ENCODE measurements at regions of chr5 and their contacts with region 1.

Region 1: GRCh38 chr5:56814963-56815658 is at the start of gene MAP3K1:
- DNase-seq: peak; percentile 81
- H3K4me3 ChIP-seq: peak within 1 kb of the TSS; percentile 66 to 88 (median 72)
- H3K27ac ChIP-seq: peak within 1 kb of the TSS; percentile 84 to 93 (median 86)
- H3K4me1 ChIP-seq: peaks cover 0 to 9% (median 3%) of the 10 kb centered on the region in 4 donors
- H3K27me3 ChIP-seq: no peaks in the 10 kb centered on the region
- CTCF ChIP-seq: no peak
- EP300 ChIP-seq: no peak
- POLR2A ChIP-seq: peak in 1 of 2 donors; percentile 31
- total RNA-seq, gene MAP3K1: 7.2 to 12.5 (median 10.3) TPM

Region 2: DNA sequence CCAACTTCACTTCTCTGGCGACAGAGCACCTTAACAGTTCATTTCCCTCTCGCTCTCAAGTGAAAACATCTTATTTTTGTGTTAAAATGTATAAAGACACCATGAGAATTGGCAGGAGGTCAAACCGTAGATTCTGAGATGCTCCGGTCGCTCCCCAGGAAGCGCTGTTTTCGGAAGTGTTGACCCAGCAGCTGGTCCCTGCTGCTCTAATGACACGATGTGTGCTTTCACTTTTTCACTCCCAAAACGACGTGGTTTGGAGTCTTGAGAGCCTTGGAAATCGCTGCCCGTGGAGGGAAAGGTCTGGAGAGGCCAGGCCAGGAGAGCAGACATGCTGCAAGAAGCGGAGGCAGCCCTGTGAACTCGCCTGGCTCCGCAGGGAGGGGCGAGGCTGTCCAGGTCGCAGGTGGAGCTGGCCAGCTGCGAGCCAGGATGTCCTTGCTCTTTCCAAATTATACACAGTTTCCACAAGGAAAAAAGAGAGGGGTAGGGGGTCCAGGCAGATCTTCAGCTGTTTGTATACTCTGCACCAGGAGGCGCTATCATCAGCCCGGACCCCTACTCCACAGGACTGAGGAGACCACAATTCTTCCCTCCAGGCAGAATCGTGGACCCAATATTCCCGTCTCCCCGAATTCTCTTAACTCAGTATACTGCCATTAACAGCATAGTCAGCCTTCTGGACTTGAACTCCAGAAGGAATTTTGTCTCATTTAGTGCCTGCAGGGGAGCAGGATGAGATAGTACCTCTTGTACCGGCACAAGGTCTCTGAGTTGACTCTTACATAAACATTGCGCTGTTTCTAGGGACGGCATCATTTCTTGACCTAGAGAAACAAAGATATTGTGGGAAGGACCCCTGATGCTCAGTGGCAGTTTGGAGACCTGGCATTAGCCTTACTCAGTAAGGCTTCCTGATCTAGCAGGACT is 333.4 kb before region 1 on chr5:
- intact Hi-C with region 1: loop called (anchors 10 kb)
- DNase-seq: peak; percentile 76
- H3K4me3 ChIP-seq: peak overlapping the region; percentile 47 to 77 (median 74)
- H3K27ac ChIP-seq: peak overlapping the region; percentile 81 to 89 (median 84)
- H3K4me1 ChIP-seq: peaks cover 0 to 24% (median 9%) of the 10 kb centered on the region in 4 donors
- H3K27me3 ChIP-seq: no peaks in the 10 kb centered on the region
- CTCF ChIP-seq: no peak
- EP300 ChIP-seq: no peak
- POLR2A ChIP-seq: no peak

Region 3: GRCh38 chr5:56909294-56910209 is 94.4 kb after region 1 on chr5 and contains the start of gene SETD9:
- intact Hi-C with region 1: loop called (anchors 5 kb)
- DNase-seq: peak; percentile 99
- H3K4me3 ChIP-seq: peak within 1 kb of the TSS; percentile 54 to 73 (median 69)
- H3K27ac ChIP-seq: peak within 1 kb of the TSS; percentile 90 to 98 (median 96)
- H3K4me1 ChIP-seq: peaks cover 0 to 9% (median 7%) of the 10 kb centered on the region in 4 donors
- H3K27me3 ChIP-seq: no peaks in the 10 kb centered on the region
- CTCF ChIP-seq: no peak
- EP300 ChIP-seq: no peak
- POLR2A ChIP-seq: peak; percentile 68 to 69
- total RNA-seq, gene SETD9: 6.6 to 30.7 (median 19.4) TPM

Region 4: DNA sequence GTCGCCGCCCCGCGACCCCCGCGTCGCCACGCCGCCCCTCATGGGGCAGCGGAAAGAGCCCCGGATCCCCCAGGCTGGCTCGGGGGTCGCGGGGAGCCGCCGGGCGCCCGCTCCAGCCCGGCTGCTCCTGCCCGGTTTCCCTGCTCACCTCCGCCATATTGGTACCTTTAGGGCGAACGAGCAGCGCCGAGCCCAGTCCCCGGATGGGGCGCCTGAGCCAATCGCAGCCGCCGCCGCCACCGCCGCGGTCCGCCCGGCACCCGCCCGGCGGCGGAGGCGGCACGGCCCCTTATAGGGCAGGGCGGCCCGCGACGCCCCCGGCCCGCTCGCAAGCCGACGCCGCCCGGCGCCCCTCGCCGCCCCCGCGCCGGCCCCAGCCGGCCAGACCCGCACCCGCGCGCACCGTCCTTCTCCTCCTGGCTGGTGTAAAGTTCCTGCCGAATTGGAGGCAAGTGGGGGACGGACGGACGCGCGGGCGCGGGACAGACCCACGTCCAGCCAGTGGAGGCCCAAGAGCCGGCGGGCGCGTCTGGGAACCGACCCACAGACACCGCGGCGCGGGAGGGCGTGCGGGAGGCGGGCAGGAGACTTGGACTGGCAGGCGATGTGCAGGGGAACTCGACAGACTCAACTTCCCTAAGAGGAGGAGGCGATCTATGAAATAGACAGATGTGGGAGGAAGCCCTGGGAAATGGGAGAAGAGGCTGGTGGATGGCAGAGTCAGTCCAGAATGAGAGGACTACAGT is 137.0 kb after region 1 on chr5 and contains the start of gene MIER3:
- intact Hi-C with region 1: loop called (anchors 5 kb)
- DNase-seq: peak; percentile 88
- H3K4me3 ChIP-seq: peak within 1 kb of the TSS; percentile 70 to 95 (median 93)
- H3K27ac ChIP-seq: peak within 1 kb of the TSS; percentile 87 to 95 (median 92)
- H3K4me1 ChIP-seq: peaks cover 0 to 21% (median 16%) of the 10 kb centered on the region in 4 donors
- H3K27me3 ChIP-seq: no peaks in the 10 kb centered on the region
- CTCF ChIP-seq: no peak
- EP300 ChIP-seq: no peak
- POLR2A ChIP-seq: no peak
- total RNA-seq, gene MIER3: 12.5 to 46.4 (median 21.7) TPM

Measured in sigmoid colon (tissue), 7 donors.